ENCODE measurements at regions of chr11 and their contacts with region 1.

Region 1: DNA sequence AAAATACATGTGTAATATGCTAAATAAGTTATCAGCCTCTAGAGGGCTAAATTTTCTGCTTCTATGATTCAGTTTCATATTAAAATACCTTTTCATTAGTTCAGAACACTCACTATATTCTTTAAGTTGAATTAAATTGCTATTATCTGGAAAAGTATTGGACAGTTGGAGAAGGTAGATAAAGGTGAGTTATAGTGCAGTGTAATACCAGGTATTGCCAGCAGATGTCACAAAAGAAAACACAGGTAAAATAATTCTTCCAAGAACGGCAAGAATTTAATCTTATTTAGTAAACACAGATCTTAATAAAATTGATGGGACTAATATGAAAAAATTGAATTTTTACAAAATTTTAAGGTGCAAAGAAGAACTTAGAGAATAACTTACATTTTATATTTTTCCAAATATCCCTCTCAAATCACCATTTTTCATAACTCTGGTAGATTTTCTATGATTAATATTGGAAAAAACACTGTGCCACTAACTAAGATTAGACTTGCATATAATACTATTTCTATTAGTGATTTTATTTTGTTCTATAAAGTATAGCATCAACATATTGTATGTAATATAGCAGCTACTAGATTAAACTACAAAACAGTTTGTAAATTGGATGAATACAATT is 1.7 kb upstream of the LRRC4C start:
- DNase-seq: no peak
- H3K4me3 ChIP-seq: no peak overlapping the region
- H3K27ac ChIP-seq: no peak overlapping the region
- H3K4me1 ChIP-seq: peaks cover 2 to 27% (median 11%) of the 10 kb centered on the region in 4 experiments; a peak in 6 of 7 replicates
- H3K27me3 ChIP-seq: no peaks in the 10 kb centered on the region
- CTCF ChIP-seq: peak in 1 of 3 experiments; percentile 48; a peak in 2 of 4 replicates
- EP300 ChIP-seq: no peak
- POLR2A ChIP-seq: no peak
- RAD21 ChIP-seq: peak; percentile 40 to 49

Region 2: DNA sequence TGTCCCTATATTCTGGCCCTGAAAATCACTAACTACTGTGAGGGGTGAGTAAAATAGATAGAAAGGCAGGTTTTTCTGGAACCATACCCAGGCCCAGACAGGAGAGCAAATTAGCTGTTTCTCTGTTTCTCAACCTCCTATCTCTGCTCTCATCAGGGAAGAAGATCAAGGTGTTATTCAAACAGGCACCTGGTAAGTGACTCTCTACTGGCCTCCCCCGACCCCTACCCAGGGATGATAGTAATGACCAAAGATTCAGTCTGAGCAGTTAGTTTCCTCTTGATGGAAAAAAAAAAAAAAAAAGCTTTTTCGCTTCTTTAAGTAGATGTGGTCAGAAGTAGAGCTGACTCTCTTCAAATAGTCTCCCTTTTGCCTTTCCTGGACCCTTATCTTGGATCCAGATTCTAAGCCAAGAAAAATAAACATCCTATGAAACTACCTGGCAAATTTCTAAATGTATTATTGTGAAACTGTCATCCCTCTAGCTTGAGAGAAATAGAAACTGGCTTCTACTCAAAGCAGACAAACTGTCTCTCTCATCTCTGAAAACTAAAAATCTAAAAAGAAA is 11.6 kb before region 1 on chr11:
- CTCF ChIA-PET with region 1: interaction called, 11 read pairs
- POLR2A ChIA-PET with region 1: no interaction called
- DNase-seq: no peak
- H3K4me3 ChIP-seq: no peak overlapping the region
- H3K27ac ChIP-seq: no peak overlapping the region
- H3K4me1 ChIP-seq: 0 out of 7 replicates have a peak, but pooled peaks cover 0 to 3% (median 0%) of the 10 kb centered on the region in 4 experiments
- H3K27me3 ChIP-seq: no peaks in the 10 kb centered on the region
- CTCF ChIP-seq: no peak
- EP300 ChIP-seq: no peak
- POLR2A ChIP-seq: no peak
- RAD21 ChIP-seq: no peak

Measured in H1 (cell line).